SK-MEL-5 (cell line): ENCODE measurements at regions of chr1 and their contacts with region 1.

Region 1: GRCh38 chr1:19596714-19597495 is 47.2 kb upstream of the NBL1 start:
- DNase-seq: peak; percentile 98

Region 2: GRCh38 chr1:19405761-19406487 is 191.0 kb before region 1 on chr1:
- in situ Hi-C with region 1: loop called (anchors 25 kb)
- DNase-seq: no peak

Region 3: DNA sequence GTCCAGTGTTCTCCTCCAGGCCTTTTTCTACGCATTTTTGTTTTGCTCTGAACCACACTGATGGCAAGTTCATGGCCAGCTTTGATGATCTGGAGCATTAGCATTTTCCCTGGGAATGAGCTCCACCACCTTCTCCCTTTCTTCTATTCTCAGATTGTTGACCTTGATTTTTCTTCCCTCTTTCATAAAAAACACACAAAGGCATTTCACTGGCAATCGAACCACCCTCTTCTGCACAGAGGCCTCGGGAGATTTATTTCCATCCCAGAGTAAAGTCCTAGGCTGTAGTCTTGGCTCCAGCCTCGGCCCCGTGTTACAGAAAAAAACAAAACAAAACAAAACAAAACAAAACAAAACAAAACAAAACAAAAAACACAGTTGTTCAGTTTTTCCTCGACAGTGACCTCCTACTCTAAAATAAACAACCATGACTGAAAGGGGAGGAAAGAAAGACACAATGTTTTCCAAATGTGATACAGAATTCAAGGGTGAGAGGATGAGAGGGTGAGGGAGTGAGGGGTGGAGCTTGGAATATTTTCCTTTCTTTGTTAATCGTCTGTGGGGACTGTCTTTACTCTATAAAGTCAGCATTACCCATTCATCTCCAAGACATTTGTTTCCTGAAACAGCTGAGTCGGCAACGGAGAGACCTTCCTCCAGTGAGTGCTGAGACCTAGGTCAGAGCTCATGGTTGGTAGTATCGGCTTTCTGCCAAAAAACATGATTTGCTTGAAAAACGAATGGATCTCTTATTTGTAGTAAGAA is 248.0 kb after region 1 on chr1:
- in situ Hi-C with region 1: no loop called
- DNase-seq: no peak